ENCODE measurements at regions of chr9 and their contacts with region 1.

Region 1: GRCh38 chr9:126228781-126229444 is 97.7 kb upstream of the MVB12B start:
- DNase-seq: peak; percentile 49
- ATAC-seq: peak; percentile 91
- H3K4me3 ChIP-seq: no peak overlapping the region
- H3K27ac ChIP-seq: no peak overlapping the region
- H3K4me1 ChIP-seq: no peaks in the 10 kb centered on the region
- H3K27me3 ChIP-seq: peaks cover 1 to 76% of the 10 kb centered on the region in 2 experiments; a peak in 4 of 5 replicates
- CTCF ChIP-seq: peak; percentile 98
- EP300 ChIP-seq: no peak
- POLR2A ChIP-seq: no peak
- RAD21 ChIP-seq: peak; percentile 86

Region 2: DNA sequence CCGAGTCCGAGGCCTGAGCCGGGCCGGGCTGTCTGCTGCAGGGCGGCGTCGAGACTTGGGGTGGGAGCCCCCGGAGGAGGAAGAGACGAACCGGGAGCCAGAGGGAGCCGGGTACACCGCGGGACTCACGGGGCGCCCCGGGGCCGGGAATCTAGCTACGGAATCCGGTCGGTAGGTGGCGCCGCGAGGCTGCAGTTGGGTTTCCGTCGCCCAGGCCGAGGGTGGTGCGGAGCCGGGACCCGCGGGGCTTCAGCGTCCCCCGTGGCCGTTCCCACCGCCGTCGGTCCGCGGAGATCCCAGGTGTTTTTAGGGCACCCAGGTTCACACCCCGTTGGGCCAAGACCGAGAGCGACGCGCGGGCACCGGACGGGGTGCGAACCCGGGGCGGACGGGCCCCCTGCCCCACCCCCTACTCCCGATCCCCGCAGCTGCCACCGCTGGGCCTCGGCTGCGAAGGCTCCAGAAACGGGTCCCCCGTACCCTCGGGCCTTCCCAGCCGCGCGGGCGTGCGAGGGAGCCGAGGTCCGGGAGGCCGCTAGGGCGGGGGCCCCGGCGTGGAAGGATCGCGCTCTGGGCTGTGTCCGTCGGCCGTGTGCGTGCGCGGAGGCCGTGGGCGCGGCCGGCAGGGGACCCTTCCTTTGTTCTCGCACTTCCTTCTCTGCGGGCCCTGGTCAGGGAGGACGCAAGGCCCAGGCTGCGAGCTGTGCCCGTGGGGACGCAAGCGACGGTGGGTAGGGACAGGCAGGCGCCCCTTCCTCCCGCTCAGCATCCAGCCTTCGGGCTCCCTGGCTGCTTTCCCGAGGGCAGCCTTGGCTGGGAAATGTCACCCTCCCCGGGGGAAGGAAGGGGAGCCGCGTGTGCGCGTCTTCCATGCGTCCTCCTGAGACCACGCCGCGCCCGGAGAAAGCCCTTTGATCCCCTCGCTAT is 820.7 kb before region 1 on chr9:
- CTCF ChIA-PET with region 1: no interaction called
- POLR2A ChIA-PET with region 1: no interaction called
- in situ Hi-C with region 1: loop called (anchors 5 kb)
- intact Hi-C with region 1: loop called (anchors 2 kb)
- DNase-seq: peak; percentile 39
- ATAC-seq: peak; percentile 84
- H3K4me3 ChIP-seq: peak overlapping the region; percentile 72 to 78 (median 78)
- H3K27ac ChIP-seq: no peak overlapping the region
- H3K4me1 ChIP-seq: peaks cover 52% of the 10 kb centered on the region
- H3K27me3 ChIP-seq: peaks cover 0 to 34% of the 10 kb centered on the region in 2 experiments; a peak in 4 of 5 replicates
- CTCF ChIP-seq: peak; percentile 96
- EP300 ChIP-seq: no peak
- POLR2A ChIP-seq: no peak
- RAD21 ChIP-seq: peak; percentile 95

Region 3: GRCh38 chr9:126049896-126050604 is 178.9 kb before region 1 on chr9:
- CTCF ChIA-PET with region 1: interaction called, 6 read pairs
- POLR2A ChIA-PET with region 1: no interaction called
- in situ Hi-C with region 1: loop called (anchors 10 kb)
- intact Hi-C with region 1: loop called (anchors 5 kb)
- DNase-seq: no peak
- ATAC-seq: peak; percentile 51
- H3K4me3 ChIP-seq: no peak overlapping the region
- H3K27ac ChIP-seq: no peak overlapping the region
- H3K4me1 ChIP-seq: no peaks in the 10 kb centered on the region
- H3K27me3 ChIP-seq: peaks cover 4% of the 10 kb centered on the region in 2 experiments; a peak in 1 of 5 replicates
- CTCF ChIP-seq: 0 out of 2 replicates have a peak, but pooled peaks have one; percentile 19
- EP300 ChIP-seq: no peak
- POLR2A ChIP-seq: no peak
- RAD21 ChIP-seq: no peak

Region 4: GRCh38 chr9:126055381-126055985 is 173.4 kb before region 1 on chr9:
- CTCF ChIA-PET with region 1: interaction called, 6 read pairs
- POLR2A ChIA-PET with region 1: no interaction called
- in situ Hi-C with region 1: loop called (anchors 10 kb)
- intact Hi-C with region 1: loop called (anchors 5 kb)
- DNase-seq: no peak
- ATAC-seq: no peak
- H3K4me3 ChIP-seq: no peak overlapping the region
- H3K27ac ChIP-seq: no peak overlapping the region
- H3K4me1 ChIP-seq: no peaks in the 10 kb centered on the region
- H3K27me3 ChIP-seq: peaks cover 1 to 25% of the 10 kb centered on the region in 2 experiments; a peak in 2 of 5 replicates
- CTCF ChIP-seq: no peak
- EP300 ChIP-seq: no peak
- POLR2A ChIP-seq: no peak
- RAD21 ChIP-seq: no peak

Region 5: DNA sequence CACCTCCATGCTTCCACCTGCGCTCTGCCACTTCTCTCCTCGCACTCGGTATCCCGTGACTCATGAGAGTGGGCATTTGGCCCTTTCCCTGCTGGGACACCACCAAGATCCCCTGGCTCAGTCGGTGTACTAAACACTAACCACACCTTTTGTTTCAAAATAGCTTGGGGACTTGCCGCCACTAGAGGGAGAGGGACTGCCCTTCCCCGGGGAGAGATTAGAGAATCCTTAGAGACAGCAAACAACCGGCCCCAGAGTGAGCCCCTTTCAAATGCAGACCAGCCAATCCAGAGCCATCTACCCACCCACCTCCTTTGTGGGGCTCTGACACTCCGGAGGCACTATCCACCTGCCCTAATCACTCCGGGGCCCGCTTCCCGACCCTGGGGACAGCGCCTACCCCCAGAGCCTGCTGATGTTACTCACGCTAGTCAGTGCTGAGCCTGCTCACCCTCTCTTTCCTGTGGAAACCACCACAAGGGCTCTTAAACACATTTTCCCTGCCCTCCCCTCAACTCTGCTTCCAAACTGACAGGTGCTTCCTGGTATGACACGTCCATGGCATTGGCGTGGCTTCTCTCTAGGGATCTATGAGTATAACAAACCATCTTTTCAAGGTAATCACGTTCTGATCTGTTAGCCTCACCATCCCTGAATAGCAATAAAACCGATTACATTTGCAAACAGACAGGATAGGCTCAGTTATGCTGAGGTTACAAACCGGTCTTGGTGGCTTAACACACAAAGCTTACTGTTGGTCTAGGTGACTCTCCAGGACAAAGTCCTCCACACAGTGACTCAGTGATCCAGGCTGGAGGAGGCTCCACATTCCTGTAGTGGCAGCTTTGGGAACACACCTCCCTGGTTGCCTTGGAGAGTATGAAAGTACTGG is 82.4 kb before region 1 on chr9:
- CTCF ChIA-PET with region 1: interaction called, 7 read pairs
- POLR2A ChIA-PET with region 1: no interaction called
- in situ Hi-C with region 1: no loop called
- intact Hi-C with region 1: loop called (anchors 2 kb)
- DNase-seq: peak; percentile 91
- ATAC-seq: peak; percentile 79
- H3K4me3 ChIP-seq: peak overlapping the region; percentile 17 to 63 (median 35); a peak in 4 of 6 replicates
- H3K27ac ChIP-seq: peak overlapping the region; percentile 86
- H3K4me1 ChIP-seq: peaks cover 64% of the 10 kb centered on the region
- H3K27me3 ChIP-seq: no peaks in the 10 kb centered on the region
- CTCF ChIP-seq: peak; percentile 81
- EP300 ChIP-seq: peak; percentile 51 to 71; a peak in 2 of 4 replicates
- POLR2A ChIP-seq: peak in 1 of 2 experiments; percentile 40; a peak in 2 of 4 replicates
- RAD21 ChIP-seq: peak; percentile 66; the same call in 1 of the 2 replicates

Region 6: GRCh38 chr9:126204708-126205664 is 23.9 kb before region 1 on chr9:
- CTCF ChIA-PET with region 1: no interaction called
- POLR2A ChIA-PET with region 1: no interaction called
- in situ Hi-C with region 1: no loop called
- intact Hi-C with region 1: no loop called
- DNase-seq: no peak
- ATAC-seq: no peak
- H3K4me3 ChIP-seq: no peak overlapping the region
- H3K27ac ChIP-seq: no peak overlapping the region
- H3K4me1 ChIP-seq: no peaks in the 10 kb centered on the region
- H3K27me3 ChIP-seq: peaks cover 0 to 14% of the 10 kb centered on the region in 2 experiments; a peak in 2 of 5 replicates
- CTCF ChIP-seq: no peak
- EP300 ChIP-seq: no peak
- POLR2A ChIP-seq: no peak
- RAD21 ChIP-seq: no peak

Measured in HepG2 (cell line).